Calu3 (cell line): ENCODE measurements at regions of chr20 and their contacts with region 1.

Region 1: DNA sequence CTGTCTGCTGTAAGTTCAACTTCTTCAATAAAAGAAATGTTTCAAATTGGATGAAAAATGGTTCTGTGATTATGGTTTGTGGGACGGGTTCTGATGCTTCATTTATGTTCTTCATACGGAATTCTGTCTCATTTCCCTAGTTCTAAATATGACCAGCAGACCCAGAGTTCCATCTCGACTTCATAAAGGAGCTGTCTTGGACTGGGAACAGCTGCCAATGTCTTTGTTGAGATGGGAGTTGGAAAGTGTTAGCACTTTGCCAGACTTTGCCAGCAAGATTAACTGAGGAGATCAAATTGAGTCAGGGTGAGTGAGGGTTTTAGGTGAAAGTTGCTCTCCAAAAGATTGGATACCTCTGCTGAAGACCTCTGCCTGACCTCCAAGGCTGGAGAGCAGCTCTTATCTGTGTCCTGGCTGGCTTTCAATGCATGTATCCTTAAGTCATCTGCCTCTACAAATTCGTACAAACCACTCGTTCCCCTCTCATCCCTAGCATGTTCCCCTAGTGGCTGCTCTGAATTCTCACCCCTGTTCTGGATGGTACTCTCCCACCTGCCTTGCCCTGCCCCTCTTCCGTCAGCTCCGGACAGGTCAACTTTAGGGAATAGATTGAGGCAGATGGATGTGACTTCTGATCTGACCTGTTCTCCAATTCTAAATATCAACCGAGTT is at the start of gene EFCAB8:
- DNase-seq: no peak
- H3K4me3 Mint-ChIP-seq: no peak within 1 kb of the TSS
- H3K27ac Mint-ChIP-seq: peak within 1 kb of the TSS; percentile 7
- H3K4me1 Mint-ChIP-seq: no peaks in the 10 kb centered on the region
- H3K27me3 Mint-ChIP-seq: no peaks in the 10 kb centered on the region
- CTCF ChIP-seq: peak; percentile 13
- total RNA-seq, gene EFCAB8: 1.1 and 2.5 TPM in 2 replicates

Region 2: GRCh38 chr20:32871627-32872160 is 12.9 kb after region 1 on chr20:
- CTCF ChIA-PET with region 1: interaction called, 10 read pairs
- intact Hi-C with region 1: no loop called
- DNase-seq: no peak
- H3K4me3 Mint-ChIP-seq: no peak overlapping the region
- H3K27ac Mint-ChIP-seq: no peak overlapping the region
- H3K4me1 Mint-ChIP-seq: no peaks in the 10 kb centered on the region
- H3K27me3 Mint-ChIP-seq: no peaks in the 10 kb centered on the region
- CTCF ChIP-seq: no peak